ENCODE measurements at regions of chr1 and their contacts with region 1.

Region 1: DNA sequence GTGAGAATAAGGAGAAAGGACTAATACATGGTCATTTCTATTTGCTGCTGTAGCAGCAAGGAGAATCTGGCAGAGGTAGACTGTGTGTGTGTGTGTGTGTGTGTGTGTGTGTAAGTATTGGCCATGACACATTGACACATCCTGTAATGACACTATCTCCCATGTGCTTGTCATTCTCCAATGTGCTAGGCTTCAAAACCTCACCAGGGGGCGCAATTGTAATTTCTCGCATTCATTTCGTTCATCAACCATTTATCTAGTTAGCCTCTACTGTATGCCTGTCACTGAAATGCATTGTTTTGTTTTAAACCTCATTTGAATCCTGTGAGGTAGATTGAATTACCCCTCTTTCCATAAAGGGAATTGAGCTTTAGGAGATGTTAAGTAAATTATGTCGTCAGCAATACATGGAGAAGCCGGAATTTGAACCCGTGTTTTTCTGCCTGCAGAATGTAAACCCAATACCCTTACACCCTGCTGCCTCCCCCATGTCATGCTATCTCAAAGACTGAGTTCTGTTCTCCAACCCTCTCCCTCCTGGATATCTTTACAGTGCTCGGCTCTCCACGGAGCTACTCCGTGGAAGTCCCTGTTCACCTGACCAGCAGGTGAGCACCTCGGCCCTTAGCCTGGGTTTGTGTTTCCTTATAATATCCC is 100.8 kb downstream of the UCK2 start:
- DNase-seq: no peak
- ATAC-seq: peak; percentile 69
- H3K4me3 ChIP-seq: no peak overlapping the region
- H3K27ac ChIP-seq: no peak overlapping the region
- H3K4me1 ChIP-seq: no peaks in the 10 kb centered on the region
- H3K27me3 ChIP-seq: no peaks in the 10 kb centered on the region
- CTCF ChIP-seq: peak; percentile 81

Region 2: DNA sequence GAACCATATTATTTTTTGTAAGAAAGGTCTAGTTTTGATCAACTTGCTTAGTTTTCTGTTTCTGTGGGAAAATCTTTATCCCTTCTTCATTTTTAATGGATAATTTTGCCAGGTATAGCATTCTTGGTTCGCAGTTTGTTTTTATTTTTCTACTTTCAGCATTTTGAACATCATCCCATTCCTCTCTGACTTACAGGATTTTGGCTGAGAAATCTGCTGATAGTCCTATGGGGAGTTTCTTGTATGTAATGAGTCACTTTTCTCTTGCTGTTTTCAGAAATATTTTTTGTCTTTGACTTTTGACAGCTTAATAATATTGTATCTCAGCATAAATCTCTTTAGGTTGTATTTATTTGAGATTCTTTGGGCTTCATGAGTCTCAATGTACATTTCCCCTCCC is 980.1 kb before region 1 on chr1:
- CTCF ChIA-PET with region 1: no interaction called
- POLR2A ChIA-PET with region 1: no interaction called
- in situ Hi-C with region 1: no loop called
- intact Hi-C with region 1: no loop called
- DNase-seq: no peak
- ATAC-seq: no peak
- H3K4me3 ChIP-seq: no peak overlapping the region
- H3K27ac ChIP-seq: no peak overlapping the region
- H3K4me1 ChIP-seq: no peaks in the 10 kb centered on the region
- H3K27me3 ChIP-seq: no peaks in the 10 kb centered on the region
- CTCF ChIP-seq: no peak

Region 3: GRCh38 chr1:166164995-166165660 is 236.9 kb after region 1 on chr1:
- CTCF ChIA-PET with region 1: interaction called, 3 read pairs
- POLR2A ChIA-PET with region 1: no interaction called
- in situ Hi-C with region 1: no loop called
- intact Hi-C with region 1: loop called (anchors 2 kb)
- DNase-seq: no peak
- ATAC-seq: peak; percentile 75
- H3K4me3 ChIP-seq: peak overlapping the region; percentile 51 to 76
- H3K27ac ChIP-seq: no peak overlapping the region
- H3K4me1 ChIP-seq: peaks cover 4% of the 10 kb centered on the region; the same call in 1 of the 2 replicates
- H3K27me3 ChIP-seq: peaks cover 26% of the 10 kb centered on the region
- CTCF ChIP-seq: peak; percentile 77

Region 4: GRCh38 chr1:166432655-166433054 is 504.5 kb after region 1 on chr1:
- CTCF ChIA-PET with region 1: no interaction called
- POLR2A ChIA-PET with region 1: no interaction called
- in situ Hi-C with region 1: no loop called
- intact Hi-C with region 1: loop called (anchors 1 kb)
- DNase-seq: no peak
- ATAC-seq: no peak
- H3K4me3 ChIP-seq: no peak overlapping the region
- H3K27ac ChIP-seq: no peak overlapping the region
- H3K4me1 ChIP-seq: no peaks in the 10 kb centered on the region
- H3K27me3 ChIP-seq: no peaks in the 10 kb centered on the region
- CTCF ChIP-seq: no peak

Region 5: DNA sequence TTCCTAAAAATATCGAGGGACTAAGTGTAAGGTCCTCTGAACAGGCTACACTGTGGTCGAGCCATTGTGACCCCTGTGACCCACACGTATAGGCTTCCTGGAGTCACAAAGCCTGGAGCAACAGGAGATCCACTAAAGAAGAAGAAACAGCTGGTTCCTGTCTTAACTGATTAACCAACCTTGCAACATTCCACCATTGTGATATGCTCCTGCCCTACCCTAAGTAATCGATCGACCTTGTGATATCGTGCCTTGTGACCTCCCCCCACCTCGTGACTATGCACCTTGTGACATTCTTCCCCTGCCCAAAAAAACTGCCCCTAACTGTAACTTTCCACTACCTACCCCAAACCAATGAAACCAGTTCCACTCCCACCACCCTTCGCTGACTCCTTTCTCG is 543.2 kb after region 1 on chr1:
- CTCF ChIA-PET with region 1: interaction called, 10 read pairs
- POLR2A ChIA-PET with region 1: no interaction called
- in situ Hi-C with region 1: no loop called
- intact Hi-C with region 1: loop called (anchors 5 kb)
- DNase-seq: no peak
- ATAC-seq: no peak
- H3K4me3 ChIP-seq: no peak overlapping the region
- H3K27ac ChIP-seq: no peak overlapping the region
- H3K4me1 ChIP-seq: no peaks in the 10 kb centered on the region
- H3K27me3 ChIP-seq: no peaks in the 10 kb centered on the region
- CTCF ChIP-seq: no peak

Region 6: DNA sequence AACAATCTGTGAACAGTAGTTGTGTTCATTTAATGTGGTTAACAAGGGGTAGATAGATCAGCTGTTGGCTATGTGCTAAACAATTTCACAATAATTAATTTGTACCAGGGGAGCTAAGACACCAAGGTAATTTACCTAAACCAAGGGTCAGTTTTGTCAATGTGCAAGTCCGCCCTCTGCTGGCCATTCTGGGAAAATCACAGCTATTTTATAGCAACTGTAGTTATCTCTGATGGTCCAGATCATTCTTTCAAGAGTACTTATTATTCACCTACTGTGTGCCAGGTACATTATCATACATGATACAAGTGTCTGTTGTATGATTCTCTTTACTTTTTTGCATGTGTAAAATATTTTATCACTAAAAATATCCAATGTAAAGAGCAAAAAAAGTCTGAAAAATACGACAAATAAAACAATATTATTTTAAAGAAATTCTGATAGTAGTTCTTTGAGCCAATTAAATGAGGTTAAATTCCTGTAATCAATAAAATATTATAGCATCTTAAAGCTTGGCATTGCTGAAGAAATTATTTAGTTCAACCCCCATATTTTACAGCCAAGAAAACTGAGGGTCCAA is 550.9 kb after region 1 on chr1:
- CTCF ChIA-PET with region 1: interaction called, 7 read pairs
- POLR2A ChIA-PET with region 1: no interaction called
- in situ Hi-C with region 1: no loop called
- intact Hi-C with region 1: loop called (anchors 5 kb)
- DNase-seq: peak; percentile 22
- ATAC-seq: 0 out of 2 replicates have a peak, but pooled peaks have one; percentile 62
- H3K4me3 ChIP-seq: no peak overlapping the region
- H3K27ac ChIP-seq: no peak overlapping the region
- H3K4me1 ChIP-seq: no peaks in the 10 kb centered on the region
- H3K27me3 ChIP-seq: no peaks in the 10 kb centered on the region; the same call in 1 of the 2 replicates
- CTCF ChIP-seq: peak; percentile 80; the same call in 1 of the 2 replicates

Region 7: DNA sequence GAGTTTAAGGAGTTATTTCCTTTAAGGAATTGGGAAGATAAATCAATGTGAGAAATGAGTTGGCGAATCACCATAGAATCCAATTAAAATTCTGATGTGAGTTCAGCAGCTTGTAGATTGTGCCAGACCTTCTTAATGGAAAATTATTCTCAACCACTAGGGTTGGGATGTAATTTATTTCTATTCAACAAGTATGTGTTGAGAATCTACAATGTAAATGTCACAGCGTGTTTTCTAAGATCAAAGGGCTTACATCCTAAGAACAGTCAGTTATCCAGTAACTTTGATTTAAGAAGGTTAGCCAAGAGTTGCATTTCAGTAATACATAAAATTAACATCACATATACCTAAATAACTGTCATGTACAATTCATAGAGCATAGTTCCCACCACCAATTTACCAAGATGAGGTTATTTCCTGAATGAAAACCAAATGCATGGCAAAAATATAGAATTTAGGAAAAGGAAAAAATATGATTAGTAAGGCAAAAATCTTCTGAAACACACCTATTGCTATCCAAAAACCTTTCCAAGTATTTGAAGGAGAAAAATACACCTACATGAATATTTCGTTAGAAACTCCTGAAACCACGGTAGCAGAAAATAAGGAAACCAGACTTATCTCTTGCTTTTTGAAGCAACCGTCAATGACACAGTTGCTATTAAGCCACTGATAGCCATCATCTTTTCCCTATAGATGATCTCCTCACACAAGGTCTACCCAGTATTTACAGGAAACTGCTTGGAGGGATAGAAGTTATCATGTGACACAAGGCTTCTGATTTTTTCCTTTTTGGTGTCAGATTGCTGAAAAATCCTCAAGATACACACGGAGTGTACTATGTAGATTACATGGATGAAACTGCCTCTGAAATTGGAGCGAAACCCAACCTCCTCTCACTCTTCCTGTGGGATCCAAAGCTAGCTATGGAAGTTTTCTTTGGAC is 651.6 kb after region 1 on chr1:
- CTCF ChIA-PET with region 1: no interaction called
- POLR2A ChIA-PET with region 1: no interaction called
- in situ Hi-C with region 1: no loop called
- intact Hi-C with region 1: no loop called
- DNase-seq: no peak
- ATAC-seq: no peak
- H3K4me3 ChIP-seq: no peak overlapping the region
- H3K27ac ChIP-seq: no peak overlapping the region
- H3K4me1 ChIP-seq: no peaks in the 10 kb centered on the region
- H3K27me3 ChIP-seq: peaks cover 4% of the 10 kb centered on the region; the same call in 1 of the 2 replicates
- CTCF ChIP-seq: no peak

Region 8: GRCh38 chr1:166839600-166840308 is 911.6 kb after region 1 on chr1:
- CTCF ChIA-PET with region 1: no interaction called
- POLR2A ChIA-PET with region 1: no interaction called
- in situ Hi-C with region 1: no loop called
- intact Hi-C with region 1: loop called (anchors 10 kb)
- DNase-seq: no peak
- ATAC-seq: peak; percentile 79
- H3K4me3 ChIP-seq: peak overlapping the region; percentile 75 to 86
- H3K27ac ChIP-seq: peak overlapping the region; percentile 75
- H3K4me1 ChIP-seq: peaks cover 12% of the 10 kb centered on the region
- H3K27me3 ChIP-seq: peaks cover 6% of the 10 kb centered on the region
- CTCF ChIP-seq: peak; percentile 51; the same call in 1 of the 2 replicates